Activated T-helper 1 cell treated with anti-CD3 and anti-CD28 coated beads, Interleukin-12 subunit alpha, Interleukin-12 subunit beta, Interleukin-2, Interleukin-4 antibody, amounts not matched to agents 30 ng/mL and 10 ng/mL and 1 ng/mL, durations not matched to agents 14 hours and 24 hours and 36 hours (primary cell): ENCODE measurements at regions of chr11 and their contacts with region 1.

Region 1: GRCh38 chr11:64225612-64226506 is at the starts of genes NUDT22 and TRPT1:
- DNase-seq: peak; percentile 92
- H3K4me3 Mint-ChIP-seq: peak within 1 kb of the TSS; percentile 87
- H3K27ac Mint-ChIP-seq: peak within 1 kb of the TSS; percentile 80
- H3K4me1 Mint-ChIP-seq: peaks cover 27% of the 10 kb centered on the region
- H3K27me3 Mint-ChIP-seq: no peaks in the 10 kb centered on the region
- total RNA-seq, gene NUDT22: 74.9 and 79.4 TPM in 2 replicates
- total RNA-seq, gene TRPT1: 30.3 and 35.5 TPM in 2 replicates

Region 2: DNA sequence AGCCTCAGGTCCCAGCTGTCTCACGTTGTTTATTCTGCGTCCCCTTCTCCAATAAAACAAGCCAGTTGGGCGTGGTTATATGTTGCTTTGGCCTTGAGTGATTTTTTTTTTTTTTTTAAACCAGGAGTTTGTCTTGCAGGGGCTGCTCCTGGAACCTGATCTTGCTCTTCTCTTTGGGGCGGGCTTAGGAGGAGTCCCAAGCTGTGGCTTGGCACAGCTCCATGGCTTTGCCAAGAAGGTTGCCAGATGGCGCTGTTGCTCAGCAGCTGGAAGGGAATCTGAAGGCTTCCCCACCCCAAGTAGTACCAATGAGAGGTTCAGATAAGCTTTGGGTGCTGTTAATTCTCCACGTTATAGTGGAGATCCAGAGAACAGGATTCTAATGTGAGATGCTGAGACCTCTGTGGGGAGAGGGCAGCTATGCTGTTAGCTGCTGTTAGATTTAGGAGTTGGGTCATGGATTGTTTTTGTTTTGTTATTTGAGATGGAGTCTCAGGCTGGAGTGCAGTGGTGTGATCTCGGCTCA is 21.3 kb before region 1 on chr11:
- intact Hi-C with region 1: loop called (anchors 1 kb)
- DNase-seq: peak; percentile 61
- H3K4me3 Mint-ChIP-seq: peak overlapping the region; percentile 78
- H3K27ac Mint-ChIP-seq: peak overlapping the region; percentile 70
- H3K4me1 Mint-ChIP-seq: peaks cover 39% of the 10 kb centered on the region
- H3K27me3 Mint-ChIP-seq: no peaks in the 10 kb centered on the region

Region 3: DNA sequence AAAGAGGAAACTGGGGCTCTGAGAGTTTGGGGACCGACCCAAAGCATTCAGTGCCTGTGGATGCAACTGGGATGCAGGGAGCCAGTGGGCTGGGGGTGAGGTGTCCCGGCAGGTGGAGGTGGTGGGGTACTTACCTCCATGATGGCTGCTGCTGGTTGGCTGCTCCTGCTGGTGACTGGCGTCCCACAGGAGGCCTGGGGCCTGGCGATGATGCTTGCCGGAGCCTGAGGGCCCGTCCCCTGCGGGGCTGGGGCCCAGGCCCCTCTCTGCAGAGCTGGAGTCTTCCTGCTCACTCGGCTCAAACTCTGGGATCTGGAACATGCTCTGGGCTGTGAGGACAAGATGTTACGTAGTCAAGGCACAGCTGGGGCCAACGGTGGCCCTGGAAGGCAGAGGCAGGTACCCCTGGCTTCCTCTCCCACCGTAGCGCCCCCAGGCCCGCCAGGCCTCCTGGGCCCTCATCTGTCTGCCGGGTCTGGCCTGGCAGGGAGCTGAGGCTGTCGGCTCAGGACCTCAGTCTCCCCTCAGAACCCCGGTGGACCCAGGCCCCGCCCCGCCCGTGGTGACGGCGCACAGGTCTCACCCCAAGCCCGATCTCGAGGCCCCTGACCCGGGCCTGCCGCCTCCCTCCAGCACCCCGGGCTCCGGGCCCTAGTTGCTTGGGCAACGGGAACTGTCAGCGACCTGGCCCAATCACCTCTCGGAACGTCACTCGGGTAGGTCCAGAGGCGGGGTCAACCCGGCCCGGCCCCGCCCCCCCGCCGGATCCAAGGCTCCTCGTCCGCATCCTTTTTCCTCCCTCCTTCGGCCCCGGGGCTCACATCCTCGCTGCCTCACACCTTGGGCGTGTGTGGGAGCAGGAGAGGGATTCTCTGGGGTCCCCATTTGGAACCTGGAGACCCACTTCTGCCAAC is 58.4 kb after region 1 on chr11 and contains the start of gene BAD:
- intact Hi-C with region 1: loop called (anchors 1 kb)
- DNase-seq: peak; percentile 91
- H3K4me3 Mint-ChIP-seq: peak within 1 kb of the TSS; percentile 87
- H3K27ac Mint-ChIP-seq: peak within 1 kb of the TSS; percentile 95
- H3K4me1 Mint-ChIP-seq: peaks cover 30% of the 10 kb centered on the region
- H3K27me3 Mint-ChIP-seq: peaks cover 1% of the 10 kb centered on the region
- total RNA-seq, gene BAD: 30.1 and 38.0 TPM in 2 replicates

Region 4: GRCh38 chr11:64723117-64723906 is 497.5 kb after region 1 on chr11 and contains the start of gene NRXN2:
- intact Hi-C with region 1: no loop called
- DNase-seq: peak; percentile 90
- H3K4me3 Mint-ChIP-seq: peak within 1 kb of the TSS; percentile 62
- H3K27ac Mint-ChIP-seq: peak within 1 kb of the TSS; percentile 52
- H3K4me1 Mint-ChIP-seq: peaks cover 13% of the 10 kb centered on the region
- H3K27me3 Mint-ChIP-seq: peaks cover 41% of the 10 kb centered on the region
- total RNA-seq, gene NRXN2: 0.17 and 0.23 TPM in 2 replicates